PC-3 (cell line): ENCODE measurements at regions of chr5 and their contacts with region 1.

Region 1: GRCh38 chr5:108148715-108149139 is 233.2 kb downstream of the FBXL17 start:
- DNase-seq: peak; percentile 59
- ATAC-seq: peak; percentile 90
- H3K4me3 ChIP-seq: no peak overlapping the region
- H3K27ac ChIP-seq: no peak overlapping the region
- H3K4me1 ChIP-seq: no peaks in the 10 kb centered on the region
- H3K27me3 ChIP-seq: no peaks in the 10 kb centered on the region
- CTCF ChIP-seq: peak; percentile 86

Region 2: GRCh38 chr5:108136493-108136892 is 12.2 kb before region 1 on chr5:
- CTCF ChIA-PET with region 1: no interaction called
- POLR2A ChIA-PET with region 1: interaction called, 11 read pairs
- intact Hi-C with region 1: no loop called
- DNase-seq: no peak
- ATAC-seq: no peak
- H3K4me3 ChIP-seq: no peak overlapping the region
- H3K27ac ChIP-seq: no peak overlapping the region
- H3K4me1 ChIP-seq: no peaks in the 10 kb centered on the region
- H3K27me3 ChIP-seq: no peaks in the 10 kb centered on the region
- CTCF ChIP-seq: no peak

Region 3: DNA sequence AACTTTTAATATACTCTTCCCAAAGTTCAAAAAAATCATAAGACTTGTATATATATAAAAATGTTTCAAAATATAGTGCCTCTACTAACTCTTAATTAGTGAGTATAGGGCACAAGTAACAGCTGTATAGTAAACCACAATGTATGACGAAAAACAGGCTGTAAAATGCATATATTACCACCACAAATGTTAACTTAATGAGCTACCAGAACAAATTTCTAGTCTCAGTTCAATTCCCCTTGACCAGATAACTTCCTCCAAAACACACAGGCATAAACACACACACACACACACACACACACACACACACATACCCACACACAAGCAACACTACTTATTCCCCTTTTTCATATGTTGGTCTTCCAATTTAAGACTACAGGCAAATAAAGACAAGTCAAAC is 154.4 kb after region 1 on chr5:
- CTCF ChIA-PET with region 1: no interaction called
- POLR2A ChIA-PET with region 1: no interaction called
- intact Hi-C with region 1: no loop called
- DNase-seq: no peak
- ATAC-seq: no peak
- H3K4me3 ChIP-seq: no peak overlapping the region
- H3K27ac ChIP-seq: no peak overlapping the region
- H3K4me1 ChIP-seq: no peaks in the 10 kb centered on the region
- H3K27me3 ChIP-seq: no peaks in the 10 kb centered on the region
- CTCF ChIP-seq: no peak